Activated CD4-positive, alpha-beta T cell treated with anti-CD3 and anti-CD28 coated beads for 36 hours (primary cell): ENCODE measurements at regions of chr11 and their contacts with region 1.

Region 1: DNA sequence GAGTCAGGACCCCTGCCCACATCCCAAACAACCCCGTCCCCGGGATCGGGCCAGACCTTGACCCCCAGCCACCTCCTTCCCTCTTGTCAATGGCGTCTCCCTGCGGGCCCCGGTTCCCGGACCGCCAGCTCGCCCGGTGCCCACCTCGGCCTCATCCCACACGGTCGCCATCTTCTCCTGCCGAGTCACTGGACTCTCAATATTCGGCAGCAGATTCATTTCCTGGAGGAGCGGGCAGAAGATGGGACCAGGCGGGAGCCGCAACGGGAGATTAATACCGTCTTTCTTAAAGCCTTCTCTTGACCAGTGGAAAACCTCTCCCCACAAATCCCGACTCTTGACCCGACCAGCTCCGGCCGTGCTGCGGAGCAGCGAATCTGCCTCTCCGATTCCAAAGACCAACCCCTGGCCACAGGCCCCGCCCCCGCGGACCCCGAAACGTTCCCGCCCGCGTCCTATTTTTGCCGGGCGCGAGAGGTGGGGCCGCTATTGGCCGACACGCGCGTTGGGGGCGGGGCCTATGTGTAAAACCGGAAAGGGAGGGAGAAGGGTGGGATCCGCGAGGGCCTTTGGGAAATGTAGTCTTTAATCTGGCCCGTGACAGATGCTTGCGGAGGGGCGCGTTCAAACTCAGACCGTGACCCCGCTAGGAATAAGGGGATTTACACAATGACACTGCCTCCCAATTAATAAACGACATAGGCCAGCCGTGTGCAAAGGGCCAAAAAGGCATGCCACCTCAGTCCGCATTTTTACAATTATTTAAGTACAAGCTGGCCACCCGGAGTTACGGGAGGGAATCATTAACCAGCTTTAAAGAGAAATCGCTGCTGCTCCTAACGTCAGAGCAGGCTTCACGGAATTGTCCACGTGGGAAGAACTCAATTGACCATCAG is at the start of gene PSMC3:
- DNase-seq: peak; percentile 100
- ATAC-seq: peak; percentile 98
- H3K4me3 Mint-ChIP-seq: peak within 1 kb of the TSS; percentile 100
- H3K27ac Mint-ChIP-seq: peak within 1 kb of the TSS; percentile 100
- H3K4me1 Mint-ChIP-seq: peaks cover 24% of the 10 kb centered on the region
- H3K27me3 Mint-ChIP-seq: no peaks in the 10 kb centered on the region
- total RNA-seq, gene PSMC3: 147 to 167 TPM

Region 2: GRCh38 chr11:46121724-46122477 is 1304.4 kb before region 1 on chr11:
- CTCF ChIA-PET with region 1: no interaction called
- POLR2A ChIA-PET with region 1: no interaction called
- intact Hi-C with region 1: loop called in 1 of 2 experiments (anchors 10 kb)
- DNase-seq: peak; percentile 83
- ATAC-seq: peak; percentile 39
- H3K4me3 Mint-ChIP-seq: peak overlapping the region; percentile 81
- H3K27ac Mint-ChIP-seq: peak overlapping the region; percentile 86
- H3K4me1 Mint-ChIP-seq: peaks cover 41% of the 10 kb centered on the region
- H3K27me3 Mint-ChIP-seq: no peaks in the 10 kb centered on the region

Region 3: DNA sequence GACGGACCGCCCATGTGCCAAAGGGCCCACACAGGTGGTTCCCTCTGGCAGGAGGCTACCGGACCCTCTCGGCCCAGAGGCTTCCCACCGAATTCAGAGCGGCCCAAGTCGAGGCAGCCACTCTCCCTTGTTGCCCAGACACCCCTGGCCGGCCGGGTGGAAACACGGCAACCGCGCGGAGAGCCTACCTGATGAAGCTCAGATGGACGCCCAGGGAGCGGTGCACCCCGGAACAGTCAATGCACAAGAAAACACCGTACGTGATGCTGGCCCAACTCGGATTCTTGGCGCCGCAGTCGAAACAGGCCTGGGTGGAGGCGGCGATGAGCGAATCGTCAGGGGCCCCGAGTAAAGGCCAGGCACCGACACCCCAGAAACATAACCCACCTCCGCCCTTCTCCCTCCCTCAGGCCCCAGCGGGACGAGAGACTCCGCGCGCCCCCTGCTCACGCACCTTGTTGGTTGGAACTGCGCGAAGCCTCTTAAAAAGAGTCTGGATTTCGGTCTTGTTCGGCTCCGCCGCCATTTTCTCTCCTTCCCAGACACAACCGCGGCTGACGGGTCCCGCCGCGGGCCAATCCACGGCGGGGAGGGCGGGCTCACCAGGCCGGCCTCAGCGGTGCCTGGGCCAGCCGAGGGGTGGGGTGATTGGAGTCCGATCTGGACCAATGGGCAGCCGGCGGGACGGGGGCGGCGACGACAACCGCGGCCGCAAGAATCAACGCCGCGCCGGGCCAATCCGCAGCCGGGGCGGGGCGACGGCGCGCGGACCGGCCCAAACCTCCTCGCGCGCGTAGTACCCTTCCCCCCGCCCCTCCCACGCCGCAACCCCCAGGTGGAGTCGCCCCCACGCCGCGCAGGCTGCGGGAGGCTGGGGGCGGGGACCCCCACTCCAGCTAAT is 249.7 kb before region 1 on chr11 and contains the start of gene ARFGAP2:
- CTCF ChIA-PET with region 1: no interaction called
- POLR2A ChIA-PET with region 1: no interaction called
- intact Hi-C with region 1: loop called in 1 of 2 experiments (anchors 1 kb)
- DNase-seq: peak; percentile 98
- ATAC-seq: peak; percentile 95
- H3K4me3 Mint-ChIP-seq: peak within 1 kb of the TSS; percentile 96
- H3K27ac Mint-ChIP-seq: peak within 1 kb of the TSS; percentile 98
- H3K4me1 Mint-ChIP-seq: peaks cover 34% of the 10 kb centered on the region
- H3K27me3 Mint-ChIP-seq: no peaks in the 10 kb centered on the region
- total RNA-seq, gene ARFGAP2: 74.9 to 76.5 TPM

Region 4: GRCh38 chr11:47269002-47269828 is 157.1 kb before region 1 on chr11:
- CTCF ChIA-PET with region 1: no interaction called
- POLR2A ChIA-PET with region 1: no interaction called
- intact Hi-C with region 1: loop called in 1 of 2 experiments (anchors 1 kb)
- DNase-seq: peak; percentile 93
- ATAC-seq: peak; percentile 61
- H3K4me3 Mint-ChIP-seq: peak overlapping the region; percentile 76
- H3K27ac Mint-ChIP-seq: peak overlapping the region; percentile 98
- H3K4me1 Mint-ChIP-seq: peaks cover 60% of the 10 kb centered on the region
- H3K27me3 Mint-ChIP-seq: no peaks in the 10 kb centered on the region

Region 5: DNA sequence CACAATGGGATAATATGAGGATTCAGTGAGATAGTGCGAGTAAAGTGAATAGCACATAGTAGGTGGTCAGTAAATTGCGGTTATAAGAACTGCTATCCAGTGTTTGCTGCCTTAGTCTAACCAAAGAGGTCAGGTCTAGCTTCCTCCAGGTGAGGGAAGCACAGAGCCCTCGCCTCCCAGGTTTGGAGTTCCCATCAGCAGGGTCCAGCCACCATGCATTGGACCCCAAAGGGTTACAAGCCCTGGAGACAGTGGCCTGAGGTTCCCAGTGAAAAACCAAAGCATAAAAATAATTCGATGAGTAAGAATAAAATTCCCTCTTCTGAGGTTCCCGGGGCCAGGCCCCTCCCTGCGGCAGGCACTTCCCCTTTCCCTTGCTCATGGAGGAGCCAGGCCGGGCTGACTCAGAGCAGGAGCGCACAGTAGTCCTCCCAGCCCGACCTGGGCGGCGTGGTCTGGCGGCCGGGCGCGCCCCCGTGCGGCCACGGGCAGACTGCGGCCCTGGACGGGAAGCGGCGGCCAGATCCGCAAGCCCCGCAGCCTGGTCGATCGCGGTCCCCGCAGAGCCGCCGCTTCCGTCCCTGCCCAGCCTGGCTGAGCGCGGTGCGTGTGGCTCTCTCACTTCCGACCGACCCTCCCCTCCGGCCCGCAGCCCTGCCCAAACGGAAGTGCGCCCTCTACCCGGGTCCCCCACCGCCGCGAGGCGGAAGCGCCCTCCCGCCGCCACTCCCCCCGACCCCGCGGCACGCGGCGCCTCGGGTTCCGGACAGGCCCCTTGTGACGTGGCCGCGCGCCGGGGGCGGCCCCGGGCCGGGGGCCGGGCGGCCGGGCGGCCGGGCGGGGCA is 18.3 kb before region 1 on chr11 and contains the start of gene SLC39A13:
- CTCF ChIA-PET with region 1: interaction called, 69 read pairs
- POLR2A ChIA-PET with region 1: interaction called, 8 read pairs
- intact Hi-C with region 1: loop called (anchors 1 to 2 kb)
- DNase-seq: peak; percentile 95
- ATAC-seq: peak; percentile 91
- H3K4me3 Mint-ChIP-seq: peak within 1 kb of the TSS; percentile 89
- H3K27ac Mint-ChIP-seq: peak within 1 kb of the TSS; percentile 94
- H3K4me1 Mint-ChIP-seq: peaks cover 16% of the 10 kb centered on the region
- H3K27me3 Mint-ChIP-seq: no peaks in the 10 kb centered on the region
- total RNA-seq, gene SLC39A13: 8.6 to 10.7 TPM

Region 6: GRCh38 chr11:47642099-47642855 is 216.0 kb after region 1 on chr11 and contains the start of gene MTCH2:
- CTCF ChIA-PET with region 1: no interaction called
- POLR2A ChIA-PET with region 1: no interaction called
- intact Hi-C with region 1: loop called in 1 of 2 experiments (anchors 1 kb)
- DNase-seq: peak; percentile 98
- ATAC-seq: peak; percentile 94
- H3K4me3 Mint-ChIP-seq: peak within 1 kb of the TSS; percentile 99
- H3K27ac Mint-ChIP-seq: peak within 1 kb of the TSS; percentile 96
- H3K4me1 Mint-ChIP-seq: peaks cover 25% of the 10 kb centered on the region
- H3K27me3 Mint-ChIP-seq: no peaks in the 10 kb centered on the region
- total RNA-seq, gene MTCH2: 94.8 to 138 TPM

Region 7: DNA sequence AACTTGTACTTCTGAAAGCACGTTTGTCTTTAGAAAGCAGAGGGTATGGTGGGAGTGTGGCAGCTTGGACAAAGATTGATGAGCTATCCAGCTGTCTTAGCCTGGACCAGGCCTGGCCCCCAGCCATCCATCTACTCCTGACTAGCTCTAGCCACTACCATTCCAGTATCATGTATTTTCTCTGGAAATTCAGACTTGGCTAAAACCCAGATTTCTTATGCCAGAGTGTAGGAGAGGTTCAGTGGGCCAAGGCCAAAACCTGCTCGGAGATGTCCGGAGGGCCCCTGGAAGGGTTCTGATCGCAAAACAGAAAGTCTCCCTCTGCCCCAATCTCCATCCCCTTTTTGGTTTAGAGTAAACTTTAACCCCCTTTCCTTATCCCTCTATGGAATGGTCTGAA is 240.8 kb after region 1 on chr11:
- CTCF ChIA-PET with region 1: no interaction called
- POLR2A ChIA-PET with region 1: no interaction called
- intact Hi-C with region 1: no loop called
- DNase-seq: no peak
- ATAC-seq: no peak
- H3K4me3 Mint-ChIP-seq: no peak overlapping the region
- H3K27ac Mint-ChIP-seq: no peak overlapping the region
- H3K4me1 Mint-ChIP-seq: peaks cover 27% of the 10 kb centered on the region
- H3K27me3 Mint-ChIP-seq: no peaks in the 10 kb centered on the region

Region 8: DNA sequence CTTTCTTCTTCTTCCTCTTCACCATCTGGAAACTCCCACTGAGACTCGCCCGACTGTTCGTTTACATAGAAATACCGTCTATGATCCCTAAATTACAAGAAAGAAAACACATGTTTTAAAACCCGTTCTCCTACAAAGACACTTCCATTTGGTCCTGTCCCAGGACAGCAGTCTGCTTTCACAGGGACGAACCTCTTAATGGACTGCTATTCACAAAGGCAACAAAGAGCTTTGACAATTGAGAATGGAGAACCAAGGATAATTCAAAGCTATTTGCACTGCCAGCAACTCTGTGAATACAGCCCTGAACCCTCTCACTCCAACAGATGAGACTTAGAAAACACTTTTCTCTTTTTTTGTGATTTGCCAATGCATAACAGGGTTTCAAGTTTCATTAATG is 305.2 kb after region 1 on chr11:
- CTCF ChIA-PET with region 1: no interaction called
- POLR2A ChIA-PET with region 1: no interaction called
- intact Hi-C with region 1: no loop called
- DNase-seq: no peak
- ATAC-seq: no peak
- H3K4me3 Mint-ChIP-seq: no peak overlapping the region
- H3K27ac Mint-ChIP-seq: no peak overlapping the region
- H3K4me1 Mint-ChIP-seq: peaks cover 2% of the 10 kb centered on the region
- H3K27me3 Mint-ChIP-seq: no peaks in the 10 kb centered on the region